HCT116 (cell line): ENCODE measurements at regions of chr11 and their contacts with region 1.

Region 1: DNA sequence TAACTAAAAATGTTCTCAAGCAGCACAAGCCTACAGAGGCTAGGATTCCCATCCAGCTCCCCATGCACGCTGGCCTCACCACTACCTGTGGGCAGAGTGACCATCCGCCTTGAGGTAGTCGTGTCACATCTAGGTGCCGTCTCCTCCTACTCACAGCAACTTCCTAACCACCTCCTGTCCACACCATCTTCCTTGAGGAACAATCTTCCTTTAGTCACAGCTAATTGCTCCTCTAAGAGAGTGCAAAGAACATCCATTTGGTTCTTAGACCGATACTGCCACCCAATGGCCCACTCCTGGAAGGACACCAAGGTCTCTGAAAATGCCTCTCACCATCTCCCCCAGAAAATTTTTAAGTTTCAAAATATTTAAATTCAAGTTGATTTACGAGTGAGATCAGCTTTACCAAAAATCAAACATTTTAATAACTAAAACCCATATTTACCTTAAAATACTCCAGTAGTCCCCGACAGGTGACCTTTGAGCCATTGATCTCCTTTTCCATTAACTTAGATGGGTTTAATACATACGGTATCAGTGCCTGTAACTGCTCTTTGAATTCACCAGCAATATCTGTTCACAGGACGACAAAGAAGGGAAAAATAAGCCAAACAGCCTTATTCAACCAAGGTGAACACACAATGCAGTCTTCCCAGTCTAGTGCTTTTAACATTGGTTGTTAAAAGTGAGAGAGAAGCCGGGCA is 21.7 kb upstream of the PLAAT3 start:
- DNase-seq: peak; percentile 28
- ATAC-seq: peak; percentile 88
- H3K4me3 ChIP-seq: no peak overlapping the region
- H3K27ac ChIP-seq: no peak overlapping the region
- H3K4me1 ChIP-seq: no peaks in the 10 kb centered on the region
- H3K27me3 ChIP-seq: no peaks in the 10 kb centered on the region
- CTCF ChIP-seq: peak; percentile 68 to 87 (median 75); a peak in 5 of 6 replicates
- POLR2A ChIP-seq: no peak
- RAD21 ChIP-seq: peak; percentile 86

Region 2: GRCh38 chr11:62974848-62975522 is 660.9 kb before region 1 on chr11:
- CTCF ChIA-PET with region 1: no interaction called
- POLR2A ChIA-PET with region 1: no interaction called
- RAD21 ChIA-PET with region 1: no interaction called
- intact Hi-C with region 1: no loop called
- DNase-seq: peak; percentile 36
- ATAC-seq: peak; percentile 94
- H3K4me3 ChIP-seq: no peak overlapping the region
- H3K27ac ChIP-seq: no peak overlapping the region
- H3K4me1 ChIP-seq: peaks cover 7 to 16% of the 10 kb centered on the region in 2 experiments; a peak in 3 of 4 replicates
- H3K27me3 ChIP-seq: no peaks in the 10 kb centered on the region
- CTCF ChIP-seq: peak; percentile 44 to 82 (median 73); a peak in 5 of 6 replicates
- POLR2A ChIP-seq: no peak
- RAD21 ChIP-seq: peak; percentile 44

Region 3: GRCh38 chr11:63032457-63032856 is 603.5 kb before region 1 on chr11:
- CTCF ChIA-PET with region 1: no interaction called
- POLR2A ChIA-PET with region 1: no interaction called
- RAD21 ChIA-PET with region 1: no interaction called
- intact Hi-C with region 1: loop called (anchors 1 kb)
- DNase-seq: no peak
- ATAC-seq: no peak
- H3K4me3 ChIP-seq: no peak overlapping the region
- H3K27ac ChIP-seq: no peak overlapping the region
- H3K4me1 ChIP-seq: 0 out of 4 replicates have a peak, but pooled peaks cover 0 to 7% of the 10 kb centered on the region in 2 experiments
- H3K27me3 ChIP-seq: no peaks in the 10 kb centered on the region; the same call in 1 of the 2 replicates
- CTCF ChIP-seq: no peak
- POLR2A ChIP-seq: no peak
- RAD21 ChIP-seq: no peak

Region 4: DNA sequence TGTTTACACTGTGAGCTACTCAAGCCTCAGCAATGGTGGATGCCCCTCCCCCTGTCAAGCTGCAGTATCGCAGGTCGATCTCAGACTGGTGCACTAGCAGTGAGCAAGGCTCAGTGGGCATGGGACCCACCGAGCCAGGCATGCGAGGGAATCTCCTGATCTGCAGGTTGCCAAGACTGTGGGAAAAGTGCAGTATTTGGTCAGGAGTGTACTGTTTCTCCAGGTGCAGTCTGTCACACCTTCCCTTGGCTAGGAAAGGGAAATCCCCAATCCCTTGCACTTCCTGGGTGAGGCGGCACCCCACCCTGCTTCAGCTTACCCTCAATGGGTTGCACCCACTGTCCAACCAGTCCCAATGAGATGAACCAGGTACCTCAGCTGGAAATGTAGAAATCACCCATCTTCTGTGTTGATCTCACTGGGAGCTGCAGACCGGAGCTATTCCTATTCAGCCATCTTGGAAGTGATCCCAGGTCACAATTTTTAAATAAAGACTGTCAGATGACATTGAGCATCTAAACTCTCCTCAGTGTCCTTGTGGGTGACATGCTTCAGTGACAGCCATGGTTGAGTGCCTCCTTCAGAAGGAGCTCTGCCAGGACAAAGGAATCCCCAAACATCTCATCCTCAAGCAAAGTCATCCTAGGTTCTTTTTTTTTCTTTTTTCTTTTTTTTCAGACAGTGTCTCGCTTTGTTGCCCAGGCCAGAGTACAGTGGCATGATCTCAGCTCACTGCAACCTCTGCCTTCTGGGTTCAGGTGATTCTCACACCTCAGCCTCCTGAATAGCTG is 502.7 kb before region 1 on chr11:
- CTCF ChIA-PET with region 1: no interaction called
- POLR2A ChIA-PET with region 1: no interaction called
- RAD21 ChIA-PET with region 1: no interaction called
- intact Hi-C with region 1: loop called (anchors 5 kb)
- DNase-seq: no peak
- ATAC-seq: no peak
- H3K4me3 ChIP-seq: no peak overlapping the region
- H3K27ac ChIP-seq: no peak overlapping the region
- H3K4me1 ChIP-seq: no peaks in the 10 kb centered on the region
- H3K27me3 ChIP-seq: peaks cover 40% of the 10 kb centered on the region
- CTCF ChIP-seq: no peak
- POLR2A ChIP-seq: no peak
- RAD21 ChIP-seq: no peak

Region 5: DNA sequence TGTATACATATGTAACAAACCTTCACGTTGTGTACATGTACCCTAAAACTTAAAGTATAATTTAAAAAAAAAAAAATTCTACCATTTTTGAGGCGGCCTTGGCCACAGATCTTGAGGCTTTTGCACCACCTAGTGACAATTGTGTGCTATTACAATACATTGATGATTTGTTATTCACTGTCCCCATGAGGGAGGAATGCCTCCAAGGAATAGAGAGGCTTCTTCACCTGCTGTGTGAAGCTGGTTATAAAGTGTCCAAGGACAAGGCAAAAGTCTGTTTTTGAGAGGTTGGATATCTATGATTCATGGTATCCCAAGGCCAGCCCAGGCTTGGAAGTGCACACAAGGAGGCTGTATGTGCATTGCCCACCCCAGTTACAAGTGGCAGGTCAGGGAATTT is 423.2 kb before region 1 on chr11:
- CTCF ChIA-PET with region 1: no interaction called
- POLR2A ChIA-PET with region 1: no interaction called
- RAD21 ChIA-PET with region 1: no interaction called
- intact Hi-C with region 1: loop called (anchors 10 kb)
- DNase-seq: peak; percentile 10
- ATAC-seq: peak; percentile 81
- H3K4me3 ChIP-seq: no peak overlapping the region
- H3K27ac ChIP-seq: no peak overlapping the region
- H3K4me1 ChIP-seq: no peaks in the 10 kb centered on the region
- H3K27me3 ChIP-seq: peaks cover 26% of the 10 kb centered on the region
- CTCF ChIP-seq: peak; percentile 38 to 56 (median 55); a peak in 4 of 6 replicates
- POLR2A ChIP-seq: no peak
- RAD21 ChIP-seq: peak; percentile 65

Region 6: DNA sequence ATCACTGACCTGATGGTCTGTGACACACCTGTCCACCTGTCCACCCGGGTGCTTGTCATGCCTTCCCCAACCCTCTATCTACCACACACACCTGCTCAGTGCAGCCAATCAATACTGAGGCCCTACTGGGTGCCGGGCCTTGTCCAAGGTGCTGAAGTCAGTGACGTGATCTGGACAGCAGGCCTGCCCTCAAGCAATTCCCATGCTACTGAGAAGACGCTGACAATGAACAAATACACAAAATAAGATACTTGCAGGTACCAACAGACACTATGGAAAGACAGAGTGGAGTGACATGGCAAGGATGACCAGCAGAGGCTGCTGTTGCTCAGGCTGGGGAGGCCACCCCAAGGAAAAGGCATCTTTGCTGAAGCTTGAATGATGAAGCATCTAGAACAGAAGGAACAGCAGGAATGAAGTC is 42.9 kb before region 1 on chr11:
- CTCF ChIA-PET with region 1: interaction called, 3 read pairs
- POLR2A ChIA-PET with region 1: no interaction called
- RAD21 ChIA-PET with region 1: no interaction called
- intact Hi-C with region 1: loop called (anchors 1 kb)
- DNase-seq: no peak
- ATAC-seq: peak; percentile 86
- H3K4me3 ChIP-seq: no peak overlapping the region
- H3K27ac ChIP-seq: no peak overlapping the region
- H3K4me1 ChIP-seq: no peaks in the 10 kb centered on the region
- H3K27me3 ChIP-seq: no peaks in the 10 kb centered on the region
- CTCF ChIP-seq: peak; percentile 30 to 79 (median 72); a peak in 5 of 6 replicates
- POLR2A ChIP-seq: no peak
- RAD21 ChIP-seq: peak; percentile 68

Region 7: GRCh38 chr11:63603163-63603518 is 32.8 kb before region 1 on chr11:
- CTCF ChIA-PET with region 1: no interaction called
- POLR2A ChIA-PET with region 1: no interaction called
- RAD21 ChIA-PET with region 1: no interaction called
- intact Hi-C with region 1: no loop called
- DNase-seq: no peak
- ATAC-seq: no peak
- H3K4me3 ChIP-seq: no peak overlapping the region
- H3K27ac ChIP-seq: no peak overlapping the region
- H3K4me1 ChIP-seq: peaks cover 0 to 10% of the 10 kb centered on the region in 2 experiments; a peak in 1 of 4 replicates
- H3K27me3 ChIP-seq: no peaks in the 10 kb centered on the region
- CTCF ChIP-seq: no peak
- POLR2A ChIP-seq: no peak
- RAD21 ChIP-seq: no peak

Region 8: DNA sequence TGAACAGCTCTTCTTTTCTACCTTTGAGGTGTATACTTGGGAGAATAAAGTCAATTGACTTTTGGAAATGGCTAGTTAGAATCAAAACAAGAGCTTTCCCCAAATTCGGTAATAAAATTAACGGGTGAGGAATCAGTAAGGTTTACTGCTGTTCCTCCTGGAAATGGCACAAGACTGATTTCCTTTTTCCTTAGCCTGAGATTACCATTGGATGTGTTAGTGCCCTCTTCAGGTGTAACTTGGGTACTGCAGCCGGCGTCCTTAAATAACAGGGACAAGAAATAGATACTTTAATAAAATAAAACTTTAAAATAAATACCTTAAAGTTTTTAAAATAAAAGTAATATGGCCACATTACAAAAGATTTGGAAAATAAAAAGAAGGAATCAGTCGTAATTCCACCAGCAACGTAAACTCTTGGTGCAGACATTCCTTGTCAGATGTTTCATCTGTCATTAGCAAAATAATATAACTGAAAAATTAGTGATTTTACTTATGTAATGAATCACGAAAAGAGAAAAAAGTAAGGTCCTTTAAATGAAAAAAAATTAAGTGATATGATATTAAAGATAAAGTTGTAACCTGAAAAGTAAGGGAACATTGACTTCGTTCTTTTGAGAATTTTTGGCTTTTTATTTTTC is 102.9 kb after region 1 on chr11:
- CTCF ChIA-PET with region 1: no interaction called
- POLR2A ChIA-PET with region 1: no interaction called
- RAD21 ChIA-PET with region 1: no interaction called
- intact Hi-C with region 1: loop called (anchors 2 kb)
- DNase-seq: peak; percentile 64
- ATAC-seq: peak; percentile 58; the same call in 1 of the 2 replicates
- H3K4me3 ChIP-seq: no peak overlapping the region
- H3K27ac ChIP-seq: no peak overlapping the region
- H3K4me1 ChIP-seq: peaks cover 0 to 6% of the 10 kb centered on the region in 2 experiments; a peak in 1 of 4 replicates
- H3K27me3 ChIP-seq: no peaks in the 10 kb centered on the region
- CTCF ChIP-seq: peak; percentile 62 to 95 (median 72); a peak in 5 of 6 replicates
- POLR2A ChIP-seq: no peak
- RAD21 ChIP-seq: peak; percentile 74